Activated T-helper 1 cell treated with anti-CD3 and anti-CD28 coated beads, Interleukin-12 subunit alpha, Interleukin-12 subunit beta, Interleukin-2, Interleukin-4 antibody, amounts not matched to agents 30 ng/mL and 10 ng/mL and 1 ng/mL, durations not matched to agents 14 hours and 24 hours and 36 hours (primary cell): ENCODE measurements at regions of chr6 and their contacts with region 1.

Region 1: DNA sequence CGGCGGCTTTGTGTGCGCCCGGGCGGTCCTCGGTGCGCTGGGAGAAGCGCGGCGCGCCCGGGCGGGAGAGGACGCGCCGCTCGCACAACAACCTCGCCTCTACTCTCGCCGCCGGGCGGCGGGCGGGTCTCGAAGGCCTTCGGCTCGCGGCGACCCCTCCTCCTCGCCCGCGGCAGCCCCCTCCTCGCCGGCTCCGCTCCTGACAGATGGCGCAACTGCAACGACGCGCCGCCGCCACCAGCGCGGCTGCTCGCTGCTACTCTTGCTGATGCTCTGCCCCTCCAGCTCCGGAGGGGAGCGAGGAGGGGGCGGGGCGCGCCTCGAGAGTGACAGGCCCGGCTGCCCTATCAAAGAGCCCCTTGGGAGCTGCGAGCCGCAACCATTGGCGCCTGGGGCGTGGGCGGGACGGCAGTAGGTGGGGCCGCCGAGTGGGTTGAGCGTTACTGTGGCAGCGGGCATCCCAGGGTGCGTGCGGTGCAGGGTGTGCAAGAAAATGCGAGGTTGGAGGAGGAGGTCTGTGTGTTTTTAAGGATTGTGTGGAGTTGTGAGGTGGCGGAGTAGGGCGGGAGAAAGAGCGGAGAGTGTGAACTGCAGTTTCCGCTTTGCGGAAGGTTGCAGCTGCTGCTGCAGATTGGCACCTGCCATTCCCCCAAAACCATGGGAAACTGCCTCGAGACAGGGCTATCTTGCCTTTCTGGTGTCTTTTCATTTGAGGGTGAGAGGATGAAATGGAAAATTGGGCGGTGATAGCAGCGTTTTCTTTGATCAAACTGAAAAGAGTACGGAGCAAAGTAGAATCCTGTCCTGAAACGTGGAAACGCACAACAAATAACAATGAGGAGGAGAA is at the start of gene FYN:
- DNase-seq: peak; percentile 98
- H3K4me3 Mint-ChIP-seq: peak within 1 kb of the TSS; percentile 99
- H3K27ac Mint-ChIP-seq: peak within 1 kb of the TSS; percentile 96
- H3K4me1 Mint-ChIP-seq: peaks cover 44% of the 10 kb centered on the region
- H3K27me3 Mint-ChIP-seq: peaks cover 6% of the 10 kb centered on the region
- total RNA-seq, gene FYN: 347 and 355 TPM in 2 replicates

Region 2: DNA sequence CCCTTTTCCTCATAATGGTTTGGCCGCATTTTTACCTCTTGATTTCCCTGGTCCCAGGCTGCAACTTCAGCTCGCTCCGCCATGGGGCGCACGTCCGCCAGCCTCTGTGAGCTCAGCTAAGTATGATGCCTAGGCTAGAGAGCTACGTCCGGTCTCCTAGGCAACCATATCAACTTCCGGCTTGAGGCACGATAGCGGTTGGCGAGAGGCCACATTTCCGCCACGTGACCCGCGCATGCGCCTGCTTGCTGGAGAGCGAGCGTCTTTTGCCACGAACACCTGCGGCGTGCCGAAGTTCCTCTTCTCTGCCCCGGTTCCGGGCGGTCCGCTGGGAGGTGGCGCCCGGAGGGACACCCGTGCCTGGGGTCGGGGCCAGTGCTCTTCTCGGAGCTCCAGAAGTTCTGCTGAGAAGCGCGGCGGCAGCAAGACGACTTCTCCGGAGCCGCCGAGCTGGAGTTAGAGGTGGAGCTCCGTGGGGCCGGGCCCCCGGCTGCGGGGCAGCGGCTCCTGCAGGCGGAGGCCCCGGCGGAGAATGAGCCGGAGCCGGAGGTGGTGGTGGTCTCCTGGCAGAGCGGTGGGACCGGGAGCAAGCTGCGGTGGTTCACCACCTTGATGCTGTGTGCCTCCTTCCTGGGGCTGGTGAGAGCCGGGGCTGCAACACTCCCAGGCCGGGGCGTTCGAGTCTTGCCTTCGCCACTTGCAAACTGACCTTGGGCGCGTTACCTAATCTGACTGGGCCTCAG is 614.1 kb before region 1 on chr6:
- intact Hi-C with region 1: loop called (anchors 2 kb)
- DNase-seq: peak; percentile 99
- H3K4me3 Mint-ChIP-seq: peak overlapping the region; percentile 81
- H3K27ac Mint-ChIP-seq: peak overlapping the region; percentile 87
- H3K4me1 Mint-ChIP-seq: peaks cover 34% of the 10 kb centered on the region
- H3K27me3 Mint-ChIP-seq: peaks cover 5% of the 10 kb centered on the region

Region 3: GRCh38 chr6:111721753-111722154 is 151.6 kb before region 1 on chr6:
- intact Hi-C with region 1: loop called (anchors 2 kb)
- DNase-seq: peak; percentile 14
- H3K4me3 Mint-ChIP-seq: no peak overlapping the region
- H3K27ac Mint-ChIP-seq: peak overlapping the region; percentile 55
- H3K4me1 Mint-ChIP-seq: peaks cover 75% of the 10 kb centered on the region
- H3K27me3 Mint-ChIP-seq: no peaks in the 10 kb centered on the region

Region 4: GRCh38 chr6:111823831-111824607 is 49.4 kb before region 1 on chr6:
- intact Hi-C with region 1: loop called (anchors 1 kb)
- DNase-seq: no peak
- H3K4me3 Mint-ChIP-seq: peak overlapping the region; percentile 72
- H3K27ac Mint-ChIP-seq: peak overlapping the region; percentile 89
- H3K4me1 Mint-ChIP-seq: peaks cover 81% of the 10 kb centered on the region
- H3K27me3 Mint-ChIP-seq: no peaks in the 10 kb centered on the region

Region 5: GRCh38 chr6:111852725-111853124 is 20.7 kb before region 1 on chr6:
- intact Hi-C with region 1: no loop called
- DNase-seq: no peak
- H3K4me3 Mint-ChIP-seq: no peak overlapping the region
- H3K27ac Mint-ChIP-seq: no peak overlapping the region
- H3K4me1 Mint-ChIP-seq: peaks cover 77% of the 10 kb centered on the region
- H3K27me3 Mint-ChIP-seq: no peaks in the 10 kb centered on the region

Region 6: DNA sequence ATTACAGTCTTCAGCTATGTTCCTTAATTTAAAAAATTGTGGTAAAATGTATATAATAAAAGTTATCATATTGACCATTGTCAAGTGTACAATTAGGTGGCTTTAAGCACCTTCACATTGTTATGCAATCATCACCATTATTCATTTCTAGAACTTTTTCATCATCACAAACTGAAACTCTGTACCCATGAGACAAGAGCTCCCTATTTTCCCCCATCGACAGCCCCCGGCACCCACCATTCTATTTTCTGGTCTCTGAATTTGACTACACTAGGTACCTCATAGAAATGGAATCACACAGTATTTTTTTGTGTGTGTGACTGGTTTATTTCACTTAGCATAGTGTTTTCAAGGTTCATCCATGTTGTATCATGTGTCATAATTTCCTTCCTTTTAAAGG is 39.5 kb after region 1 on chr6:
- intact Hi-C with region 1: loop called (anchors 5 kb)
- DNase-seq: no peak
- H3K4me3 Mint-ChIP-seq: no peak overlapping the region
- H3K27ac Mint-ChIP-seq: no peak overlapping the region
- H3K4me1 Mint-ChIP-seq: peaks cover 6% of the 10 kb centered on the region
- H3K27me3 Mint-ChIP-seq: no peaks in the 10 kb centered on the region

Region 7: GRCh38 chr6:111997078-111997852 is 123.9 kb after region 1 on chr6:
- intact Hi-C with region 1: loop called (anchors 1 kb)
- DNase-seq: peak; percentile 68
- H3K4me3 Mint-ChIP-seq: peak overlapping the region; percentile 45
- H3K27ac Mint-ChIP-seq: peak overlapping the region; percentile 46
- H3K4me1 Mint-ChIP-seq: peaks cover 46% of the 10 kb centered on the region
- H3K27me3 Mint-ChIP-seq: no peaks in the 10 kb centered on the region